Calu3 (cell line): ENCODE measurements at regions of chr3 and their contacts with region 1.

Region 1: DNA sequence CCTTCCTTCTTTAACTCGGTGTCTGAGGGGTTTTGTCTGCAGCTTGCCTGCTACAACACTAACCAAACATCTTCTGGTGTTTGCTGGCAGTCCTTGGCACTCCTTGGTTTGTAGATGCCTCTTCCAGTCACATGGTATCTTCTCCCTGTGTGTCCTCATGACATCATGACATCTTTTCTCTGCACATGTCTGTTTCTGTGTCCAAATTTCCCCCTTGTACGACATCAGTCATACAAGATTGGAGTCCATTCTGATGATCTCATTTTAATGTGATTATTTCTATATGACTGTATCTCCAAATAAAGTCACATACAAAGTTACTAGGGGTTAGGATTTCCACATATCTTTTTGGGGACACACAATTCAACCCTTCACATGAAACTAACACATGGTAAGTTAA is 152.3 kb upstream of the LRRN1 start:
- DNase-seq: no peak
- H3K4me3 Mint-ChIP-seq: peak overlapping the region; percentile 41
- H3K27ac Mint-ChIP-seq: peak overlapping the region; percentile 74
- H3K4me1 Mint-ChIP-seq: peaks cover 37% of the 10 kb centered on the region
- H3K27me3 Mint-ChIP-seq: no peaks in the 10 kb centered on the region
- CTCF ChIP-seq: no peak

Region 2: DNA sequence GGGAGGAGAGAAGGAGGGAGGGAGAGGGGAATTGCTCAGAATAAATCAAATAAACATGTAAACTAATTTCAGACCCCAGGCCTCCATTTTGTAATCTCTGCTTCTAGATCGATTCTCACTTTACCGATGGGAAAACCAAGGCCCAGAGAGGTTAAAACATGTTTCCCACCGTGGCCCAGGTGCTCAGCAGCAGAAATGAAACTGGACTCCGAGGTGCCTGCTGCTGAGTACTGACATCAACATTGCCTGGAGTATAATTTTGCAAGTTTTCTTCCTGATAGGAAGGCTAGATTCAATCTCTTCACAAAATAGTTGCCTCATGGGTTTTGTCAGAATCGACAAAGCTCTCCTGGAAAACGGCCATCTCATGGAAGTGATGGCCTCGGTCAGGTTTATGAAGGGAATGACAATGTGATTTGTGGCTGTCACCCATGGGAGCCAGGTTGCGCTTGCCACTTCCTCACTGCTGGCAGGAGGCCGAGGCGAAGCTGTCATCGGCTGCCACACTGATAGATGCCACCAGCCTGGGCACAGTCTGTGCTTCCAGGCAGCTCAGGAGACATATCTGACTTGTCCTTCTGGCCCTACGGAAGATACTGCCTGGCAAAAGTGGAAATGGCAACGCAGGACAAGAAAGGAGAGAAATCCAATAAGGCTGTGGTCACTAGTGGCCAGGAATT is 19.2 kb after region 1 on chr3:
- CTCF ChIA-PET with region 1: no interaction called
- intact Hi-C with region 1: loop called (anchors 2 kb)
- DNase-seq: peak; percentile 31
- H3K4me3 Mint-ChIP-seq: peak overlapping the region; percentile 42
- H3K27ac Mint-ChIP-seq: peak overlapping the region; percentile 83
- H3K4me1 Mint-ChIP-seq: peaks cover 41% of the 10 kb centered on the region
- H3K27me3 Mint-ChIP-seq: no peaks in the 10 kb centered on the region
- CTCF ChIP-seq: no peak

Region 3: GRCh38 chr3:3699816-3700633 is 53.1 kb after region 1 on chr3:
- CTCF ChIA-PET with region 1: interaction called, 4 read pairs
- intact Hi-C with region 1: loop called (anchors 2 kb)
- DNase-seq: peak; percentile 22
- H3K4me3 Mint-ChIP-seq: no peak overlapping the region
- H3K27ac Mint-ChIP-seq: peak overlapping the region; percentile 35
- H3K4me1 Mint-ChIP-seq: peaks cover 31% of the 10 kb centered on the region
- H3K27me3 Mint-ChIP-seq: no peaks in the 10 kb centered on the region
- CTCF ChIP-seq: no peak